ENCODE measurements at regions of chr1 and their contacts with region 1.

Region 1: DNA sequence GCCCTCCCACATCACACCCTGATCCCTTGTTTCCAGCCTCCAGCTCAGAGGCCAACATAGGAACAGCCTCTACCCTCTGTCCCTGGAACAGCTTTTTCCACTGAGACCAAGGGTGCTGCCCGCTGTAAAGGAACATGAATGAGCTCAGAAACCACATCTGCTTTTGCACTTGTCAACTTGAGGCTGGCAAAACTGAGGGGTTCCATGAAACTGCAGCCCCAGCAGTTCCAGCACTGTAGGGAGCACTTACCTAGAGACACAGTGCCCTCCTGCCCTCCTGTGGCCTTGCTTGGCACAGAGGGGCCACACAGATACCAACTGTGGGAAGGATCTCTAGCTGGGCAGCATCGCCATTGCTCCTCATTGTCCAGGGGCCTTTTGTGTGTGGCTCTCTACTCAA is 51.7 kb downstream of the ITPKB start:
- DNase-seq: peak; percentile 43 to 71 (median 52)
- H3K4me3 ChIP-seq: no peak overlapping the region
- H3K4me3 Mint-ChIP-seq: peak overlapping the region in 7 of 8 donors; percentile 21 to 70 (median 37)
- H3K27ac ChIP-seq: peak overlapping the region; percentile 89
- H3K27ac Mint-ChIP-seq: peak overlapping the region; percentile 94 to 99 (median 99)
- H3K4me1 ChIP-seq: peaks cover 100% of the 10 kb centered on the region
- H3K4me1 Mint-ChIP-seq: peaks cover 92 to 100% (median 97%) of the 10 kb centered on the region in 4 donors
- H3K27me3 ChIP-seq: no peaks in the 10 kb centered on the region
- H3K27me3 Mint-ChIP-seq: no peaks in the 10 kb centered on the region

Region 2: DNA sequence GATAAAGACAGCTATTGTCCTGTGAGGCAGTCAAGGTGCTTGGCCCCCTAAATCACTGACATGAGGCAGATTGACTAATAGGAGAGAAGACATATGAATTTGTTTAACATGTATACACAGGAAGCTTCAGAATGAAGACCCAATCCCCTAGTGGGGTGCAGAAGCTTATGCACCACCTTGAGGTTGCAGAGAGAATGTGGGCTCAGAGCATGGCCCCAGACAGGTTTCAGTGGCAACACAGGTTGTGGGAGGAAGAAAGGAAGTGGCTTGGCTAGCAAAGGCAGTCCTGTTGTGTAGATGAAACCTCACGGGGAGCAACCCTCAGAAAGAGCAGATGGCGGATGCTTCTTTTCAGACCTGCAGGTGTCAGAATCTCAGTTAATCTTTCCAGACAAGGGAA is 242.5 kb before region 1 on chr1:
- CTCF ChIA-PET with region 1: no interaction called
- POLR2A ChIA-PET with region 1: no interaction called
- intact Hi-C with region 1: no loop called
- DNase-seq: peak; percentile 77 to 82 (median 78)
- H3K4me3 ChIP-seq: no peak overlapping the region
- H3K4me3 Mint-ChIP-seq: peak overlapping the region; percentile 33 to 75 (median 61)
- H3K27ac ChIP-seq: no peak overlapping the region
- H3K27ac Mint-ChIP-seq: peak overlapping the region; percentile 55 to 91 (median 82)
- H3K4me1 ChIP-seq: peaks cover 29% of the 10 kb centered on the region
- H3K4me1 Mint-ChIP-seq: peaks cover 21 to 34% (median 26%) of the 10 kb centered on the region in 4 donors
- H3K27me3 ChIP-seq: no peaks in the 10 kb centered on the region
- H3K27me3 Mint-ChIP-seq: no peaks in the 10 kb centered on the region

Region 3: DNA sequence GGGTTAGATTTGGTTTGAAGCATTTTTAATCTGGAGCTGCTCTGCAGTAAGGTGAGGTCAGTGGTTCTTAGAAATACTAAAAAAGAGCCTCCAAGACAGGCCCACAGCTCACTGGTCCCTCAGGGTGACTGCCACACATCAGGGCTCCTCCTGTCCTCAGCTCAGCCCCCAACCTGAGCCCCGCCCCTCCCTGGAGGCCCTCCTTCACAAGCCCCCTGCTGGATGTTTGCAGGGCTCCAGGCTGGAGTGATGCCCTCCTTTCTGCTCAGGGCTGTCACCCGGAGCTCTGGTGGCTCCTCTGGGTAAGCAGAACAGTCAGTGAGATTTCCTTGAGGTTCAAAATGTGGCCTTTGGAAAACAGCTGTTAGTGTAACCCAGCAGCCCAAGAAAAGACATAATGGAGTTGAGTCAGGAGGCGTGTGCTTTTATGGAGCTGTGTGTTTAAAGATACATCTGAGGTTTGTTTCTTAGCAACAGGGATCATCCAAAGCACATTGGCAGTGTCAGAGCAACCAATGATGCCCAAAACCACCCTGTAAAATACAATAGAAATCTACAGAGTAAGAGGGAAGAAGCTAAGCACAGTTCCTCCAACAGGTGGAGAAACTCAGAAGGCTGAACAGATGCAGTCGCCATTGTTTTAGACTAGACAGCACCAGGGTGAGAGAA is 117.4 kb before region 1 on chr1:
- CTCF ChIA-PET with region 1: no interaction called
- POLR2A ChIA-PET with region 1: no interaction called
- intact Hi-C with region 1: no loop called
- DNase-seq: peak in 1 of 5 donors; percentile 6
- H3K4me3 ChIP-seq: no peak overlapping the region
- H3K4me3 Mint-ChIP-seq: no peak overlapping the region
- H3K27ac ChIP-seq: no peak overlapping the region
- H3K27ac Mint-ChIP-seq: no peak overlapping the region
- H3K4me1 ChIP-seq: no peaks in the 10 kb centered on the region
- H3K4me1 Mint-ChIP-seq: peaks cover 0 to 5% (median 0%) of the 10 kb centered on the region in 4 donors
- H3K27me3 ChIP-seq: no peaks in the 10 kb centered on the region
- H3K27me3 Mint-ChIP-seq: peaks cover 4 to 15% of the 10 kb centered on the region in 2 donors

Region 4: DNA sequence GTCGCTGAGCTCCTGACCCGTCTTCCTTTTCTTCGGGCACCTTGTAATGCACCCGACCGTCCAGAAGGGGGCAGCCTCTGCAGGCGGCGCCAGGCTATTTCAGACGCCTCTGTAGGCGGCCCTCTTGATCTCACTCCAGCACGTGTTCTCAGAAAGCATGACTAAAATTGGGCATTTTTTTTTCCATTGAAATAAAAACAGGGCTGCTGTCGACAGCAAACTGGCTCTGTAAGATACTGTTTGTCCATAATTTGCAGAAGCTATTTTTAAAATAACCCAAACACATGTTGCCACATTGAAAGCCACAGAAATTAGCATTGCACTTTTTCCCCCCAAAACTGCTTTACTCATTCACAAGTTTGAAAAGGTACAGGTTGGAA is 60.9 kb before region 1 on chr1:
- CTCF ChIA-PET with region 1: interaction called, 19 read pairs
- POLR2A ChIA-PET with region 1: interaction called, 3 read pairs
- intact Hi-C with region 1: no loop called
- DNase-seq: peak; percentile 71 to 79 (median 74)
- H3K4me3 ChIP-seq: no peak overlapping the region
- H3K4me3 Mint-ChIP-seq: peak overlapping the region; percentile 34 to 84 (median 61)
- H3K27ac ChIP-seq: no peak overlapping the region
- H3K27ac Mint-ChIP-seq: peak overlapping the region in 6 of 7 donors; percentile 12 to 89 (median 64)
- H3K4me1 ChIP-seq: peaks cover 11% of the 10 kb centered on the region
- H3K4me1 Mint-ChIP-seq: peaks cover 11 to 31% (median 22%) of the 10 kb centered on the region in 4 donors
- H3K27me3 ChIP-seq: no peaks in the 10 kb centered on the region
- H3K27me3 Mint-ChIP-seq: peaks cover 0 to 2% of the 10 kb centered on the region in 2 donors

Region 5: GRCh38 chr1:226642876-226643576 is 44.4 kb before region 1 on chr1:
- CTCF ChIA-PET with region 1: interaction called, 10 read pairs
- POLR2A ChIA-PET with region 1: interaction called, 3 read pairs
- intact Hi-C with region 1: no loop called
- DNase-seq: peak in 1 of 5 donors; percentile 80
- H3K4me3 ChIP-seq: no peak overlapping the region
- H3K4me3 Mint-ChIP-seq: peak overlapping the region in 7 of 8 donors; percentile 26 to 76 (median 62)
- H3K27ac ChIP-seq: peak overlapping the region; percentile 42
- H3K27ac Mint-ChIP-seq: peak overlapping the region in 6 of 7 donors; percentile 87 to 92 (median 90)
- H3K4me1 ChIP-seq: peaks cover 59% of the 10 kb centered on the region
- H3K4me1 Mint-ChIP-seq: peaks cover 30 to 76% (median 48%) of the 10 kb centered on the region in 4 donors
- H3K27me3 ChIP-seq: no peaks in the 10 kb centered on the region
- H3K27me3 Mint-ChIP-seq: no peaks in the 10 kb centered on the region

Region 6: DNA sequence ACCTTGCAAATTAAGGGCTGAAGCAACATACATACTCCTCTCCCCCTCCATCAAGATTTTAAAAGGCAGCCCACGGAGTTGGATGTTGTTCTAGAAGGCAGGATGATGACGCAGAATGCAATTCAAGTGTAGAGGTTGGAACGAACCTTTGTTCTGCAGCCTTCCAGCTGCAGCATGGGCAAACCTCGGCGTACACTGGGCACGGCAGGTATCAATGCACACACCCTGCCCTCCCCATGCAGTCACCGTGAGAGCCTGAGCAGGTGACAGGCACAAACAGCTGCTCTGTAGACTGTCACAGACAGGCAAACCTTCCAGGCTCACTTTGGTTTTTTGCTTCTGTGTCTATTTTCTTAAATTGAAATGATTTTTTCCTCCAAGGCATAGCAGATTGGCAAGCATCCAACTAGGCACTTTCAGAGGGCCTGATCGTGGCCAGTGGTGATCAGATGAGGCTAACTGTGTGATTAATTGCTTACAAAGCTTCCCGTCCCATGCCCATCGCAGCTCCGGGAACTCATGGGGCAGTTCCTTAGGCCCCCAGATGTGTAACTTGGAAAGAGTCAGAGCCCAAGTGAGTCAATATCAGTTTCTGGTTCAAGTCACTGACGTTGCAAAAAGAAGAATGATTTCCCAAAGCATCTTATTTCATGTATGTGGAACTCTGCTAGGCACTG is 30.7 kb before region 1 on chr1:
- CTCF ChIA-PET with region 1: interaction called, 14 read pairs
- POLR2A ChIA-PET with region 1: interaction called, 16 read pairs
- intact Hi-C with region 1: loop called (anchors 5 kb)
- DNase-seq: peak; percentile 61 to 85 (median 63)
- H3K4me3 ChIP-seq: peak overlapping the region in 1 of 2 donors; percentile 11
- H3K4me3 Mint-ChIP-seq: peak overlapping the region; percentile 48 to 88 (median 60)
- H3K27ac ChIP-seq: no peak overlapping the region
- H3K27ac Mint-ChIP-seq: peak overlapping the region in 2 of 7 donors; percentile 93 to 97
- H3K4me1 ChIP-seq: no peaks in the 10 kb centered on the region
- H3K4me1 Mint-ChIP-seq: peaks cover 0 to 82% (median 36%) of the 10 kb centered on the region in 4 donors
- H3K27me3 ChIP-seq: no peaks in the 10 kb centered on the region
- H3K27me3 Mint-ChIP-seq: no peaks in the 10 kb centered on the region

Region 7: GRCh38 chr1:226827968-226828513 is 140.6 kb after region 1 on chr1:
- CTCF ChIA-PET with region 1: interaction called, 17 read pairs
- POLR2A ChIA-PET with region 1: no interaction called
- intact Hi-C with region 1: loop called (anchors 5 kb)
- DNase-seq: peak; percentile 87 to 93 (median 90)
- H3K4me3 ChIP-seq: peak overlapping the region in 1 of 2 donors; percentile 11
- H3K4me3 Mint-ChIP-seq: peak overlapping the region; percentile 31 to 77 (median 53)
- H3K27ac ChIP-seq: peak overlapping the region; percentile 48
- H3K27ac Mint-ChIP-seq: peak overlapping the region; percentile 70 to 87 (median 80)
- H3K4me1 ChIP-seq: peaks cover 11% of the 10 kb centered on the region
- H3K4me1 Mint-ChIP-seq: peaks cover 9 to 31% (median 14%) of the 10 kb centered on the region in 4 donors
- H3K27me3 ChIP-seq: no peaks in the 10 kb centered on the region
- H3K27me3 Mint-ChIP-seq: no peaks in the 10 kb centered on the region

Region 8: GRCh38 chr1:226934483-226935237 is 247.2 kb after region 1 on chr1:
- CTCF ChIA-PET with region 1: no interaction called
- POLR2A ChIA-PET with region 1: no interaction called
- intact Hi-C with region 1: no loop called
- DNase-seq: no peak
- H3K4me3 ChIP-seq: no peak overlapping the region
- H3K4me3 Mint-ChIP-seq: no peak overlapping the region
- H3K27ac ChIP-seq: no peak overlapping the region
- H3K27ac Mint-ChIP-seq: no peak overlapping the region
- H3K4me1 ChIP-seq: peaks cover 15% of the 10 kb centered on the region
- H3K4me1 Mint-ChIP-seq: peaks cover 4 to 20% (median 10%) of the 10 kb centered on the region in 4 donors
- H3K27me3 ChIP-seq: no peaks in the 10 kb centered on the region
- H3K27me3 Mint-ChIP-seq: peaks cover 0 to 2% of the 10 kb centered on the region in 2 donors

Region 9: DNA sequence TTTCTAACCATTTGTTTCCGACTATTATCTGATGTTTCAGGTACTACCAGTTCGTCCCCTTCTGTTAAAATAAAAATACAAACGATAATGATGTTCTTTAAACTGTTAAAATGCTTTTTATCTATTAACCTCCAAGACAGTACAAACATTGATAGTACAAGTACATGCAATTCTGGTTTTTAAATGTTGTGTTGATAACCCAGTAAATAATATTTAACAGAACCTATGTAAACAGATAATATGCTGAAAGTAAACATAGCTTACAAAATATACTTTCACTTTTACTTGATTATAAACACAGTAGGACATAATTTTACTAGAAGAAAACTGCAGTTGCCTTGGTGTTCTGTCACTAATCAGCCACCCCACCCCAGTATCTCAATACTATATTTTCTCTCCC is 329.6 kb after region 1 on chr1:
- CTCF ChIA-PET with region 1: no interaction called
- POLR2A ChIA-PET with region 1: no interaction called
- intact Hi-C with region 1: no loop called
- DNase-seq: no peak
- H3K4me3 ChIP-seq: no peak overlapping the region
- H3K4me3 Mint-ChIP-seq: no peak overlapping the region
- H3K27ac ChIP-seq: no peak overlapping the region
- H3K27ac Mint-ChIP-seq: no peak overlapping the region
- H3K4me1 ChIP-seq: no peaks in the 10 kb centered on the region
- H3K4me1 Mint-ChIP-seq: no peaks in the 10 kb centered on the region
- H3K27me3 ChIP-seq: no peaks in the 10 kb centered on the region
- H3K27me3 Mint-ChIP-seq: peaks cover 3 to 12% of the 10 kb centered on the region in 2 donors

Measured in CD4-positive, alpha-beta memory T cell (primary cell).